ENCODE measurements at regions of chrX and their contacts with region 1.

Region 1: DNA sequence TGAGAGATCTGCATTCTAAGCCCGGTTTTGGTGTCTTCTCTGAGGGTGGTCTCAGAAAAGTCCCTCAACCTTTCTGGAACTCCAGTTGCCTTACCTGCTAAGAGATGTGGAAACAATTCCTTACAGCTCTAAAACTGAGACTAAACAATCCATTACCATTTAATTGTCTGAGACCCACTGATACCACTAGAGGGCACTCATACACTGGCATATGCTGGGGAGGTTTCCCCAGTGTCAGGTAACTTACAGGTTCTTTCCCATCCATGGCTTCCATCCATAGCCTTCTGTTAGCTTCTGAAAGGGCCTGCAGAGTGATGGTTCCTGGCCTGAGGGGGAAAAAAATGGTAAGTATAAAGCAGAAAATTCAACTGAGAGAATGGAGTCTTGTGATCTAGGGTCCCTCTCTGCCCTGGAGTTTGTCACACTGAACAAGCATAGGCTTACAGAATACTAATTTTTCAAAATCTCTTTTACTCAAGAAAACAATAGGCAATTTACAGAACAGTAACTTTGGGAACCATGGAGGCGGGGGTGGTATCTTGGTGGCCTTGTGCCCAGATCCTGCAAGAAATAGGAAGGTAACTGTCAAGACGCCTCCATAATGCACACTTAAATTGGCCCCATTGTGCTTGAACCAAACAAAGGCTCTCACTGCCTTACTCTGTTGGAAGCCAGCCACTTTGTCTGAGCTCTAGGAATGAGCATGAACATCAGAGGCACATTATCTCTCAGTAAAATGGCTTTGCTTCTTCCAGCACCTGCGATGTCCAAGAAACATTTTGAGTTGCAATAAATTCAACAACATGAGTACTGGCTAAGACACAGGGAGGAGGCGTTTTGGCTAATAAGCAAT is 236.1 kb downstream of the OPHN1 start:
- H3K4me3 ChIP-seq: no peak overlapping the region
- H3K27ac ChIP-seq: no peak overlapping the region
- H3K4me1 ChIP-seq: no peaks in the 10 kb centered on the region
- CTCF ChIP-seq: peak; percentile 80

Region 2: DNA sequence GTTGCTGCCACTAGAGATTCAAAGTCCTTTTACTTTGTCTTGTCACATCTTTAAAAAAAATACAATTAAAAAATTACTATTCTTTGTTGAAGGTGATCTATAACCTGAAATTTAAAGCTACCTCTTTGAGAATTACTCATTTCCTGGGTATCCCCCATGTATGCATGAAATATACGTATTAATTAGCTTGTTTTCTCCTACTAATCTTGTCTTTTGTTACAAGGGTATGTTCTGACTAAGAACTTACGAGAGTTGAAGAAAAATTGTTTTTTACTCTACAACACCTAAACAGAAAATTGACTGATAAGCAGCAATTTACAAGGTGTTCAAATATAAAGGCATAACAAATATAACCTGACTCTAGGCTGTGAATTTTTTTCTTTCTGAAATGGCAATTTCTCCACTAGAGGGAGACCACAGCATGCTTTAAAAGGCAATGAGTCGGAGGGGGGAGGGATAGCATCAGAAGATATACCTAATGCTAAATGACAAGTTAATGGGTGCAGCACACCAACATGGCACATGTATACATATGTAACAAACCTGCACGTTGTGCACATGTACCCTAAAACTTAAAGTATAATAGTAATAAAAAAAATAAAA is 13.5 kb before region 1 on chrX:
- CTCF ChIA-PET with region 1: interaction called, 18 read pairs
- POLR2A ChIA-PET with region 1: no interaction called
- H3K4me3 ChIP-seq: no peak overlapping the region
- H3K27ac ChIP-seq: no peak overlapping the region
- H3K4me1 ChIP-seq: no peaks in the 10 kb centered on the region
- CTCF ChIP-seq: peak; percentile 57

Region 3: DNA sequence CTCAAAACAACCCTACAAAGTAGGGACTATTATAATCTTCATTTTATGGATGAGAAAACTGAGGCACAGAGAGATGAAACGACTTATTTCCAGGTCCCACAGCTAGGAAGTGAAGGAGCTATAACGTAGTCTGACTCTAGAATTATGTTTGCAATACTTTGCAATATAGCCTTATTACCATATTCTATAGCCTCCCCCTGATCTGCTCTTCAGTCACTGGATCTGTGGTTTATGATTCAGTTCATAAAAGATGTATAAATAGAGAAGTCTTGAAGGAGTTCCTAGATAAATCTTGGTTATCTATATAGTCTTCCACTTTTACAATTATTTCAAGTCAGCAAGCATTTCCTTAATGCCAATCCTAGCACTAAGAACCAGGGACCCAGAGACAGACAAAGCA is 178.6 kb after region 1 on chrX:
- CTCF ChIA-PET with region 1: no interaction called
- POLR2A ChIA-PET with region 1: no interaction called
- H3K4me3 ChIP-seq: no peak overlapping the region
- H3K27ac ChIP-seq: no peak overlapping the region
- H3K4me1 ChIP-seq: no peaks in the 10 kb centered on the region
- CTCF ChIP-seq: no peak

Region 4: GRCh38 chrX:68433155-68433980 is 236.2 kb after region 1 on chrX and contains the start of gene OPHN1:
- CTCF ChIA-PET with region 1: no interaction called
- POLR2A ChIA-PET with region 1: no interaction called
- H3K4me3 ChIP-seq: peak within 1 kb of the TSS; percentile 55
- H3K27ac ChIP-seq: peak within 1 kb of the TSS; percentile 58
- H3K4me1 ChIP-seq: peaks cover 6% of the 10 kb centered on the region
- CTCF ChIP-seq: no peak

Region 5: GRCh38 chrX:68462653-68463052 is 265.5 kb after region 1 on chrX:
- CTCF ChIA-PET with region 1: interaction called, 16 read pairs
- POLR2A ChIA-PET with region 1: no interaction called
- H3K4me3 ChIP-seq: no peak overlapping the region
- H3K27ac ChIP-seq: no peak overlapping the region
- H3K4me1 ChIP-seq: no peaks in the 10 kb centered on the region
- CTCF ChIP-seq: peak; percentile 92

Region 6: DNA sequence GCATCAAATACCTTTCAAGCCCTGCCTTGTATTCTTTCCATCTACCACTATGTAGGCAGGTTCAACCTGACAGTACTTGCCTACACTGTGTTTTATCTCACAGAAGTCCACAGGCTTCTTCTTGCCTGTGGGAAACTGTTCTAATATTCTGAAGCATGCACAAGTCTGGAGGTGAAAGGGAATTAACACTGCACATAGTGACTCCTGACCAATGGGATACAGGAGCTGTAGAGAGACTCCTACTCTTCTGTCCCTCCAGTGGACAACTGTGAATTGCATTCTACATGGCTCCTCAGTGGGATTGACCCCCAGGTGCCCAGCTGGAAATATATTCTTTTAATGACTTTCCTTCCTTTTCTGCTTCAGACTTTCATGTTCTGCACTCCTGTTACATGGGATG is 293.4 kb after region 1 on chrX:
- CTCF ChIA-PET with region 1: interaction called, 28 read pairs
- POLR2A ChIA-PET with region 1: no interaction called
- H3K4me3 ChIP-seq: no peak overlapping the region
- H3K27ac ChIP-seq: no peak overlapping the region
- H3K4me1 ChIP-seq: no peaks in the 10 kb centered on the region
- CTCF ChIP-seq: no peak

Region 7: GRCh38 chrX:68511255-68511654 is 314.1 kb after region 1 on chrX:
- CTCF ChIA-PET with region 1: interaction called, 12 read pairs
- POLR2A ChIA-PET with region 1: no interaction called
- H3K4me3 ChIP-seq: no peak overlapping the region
- H3K27ac ChIP-seq: no peak overlapping the region
- H3K4me1 ChIP-seq: no peaks in the 10 kb centered on the region
- CTCF ChIP-seq: peak; percentile 56

Region 8: GRCh38 chrX:68710870-68711576 is 513.9 kb after region 1 on chrX:
- CTCF ChIA-PET with region 1: interaction called, 82 read pairs
- POLR2A ChIA-PET with region 1: no interaction called
- H3K4me3 ChIP-seq: no peak overlapping the region
- H3K27ac ChIP-seq: no peak overlapping the region
- H3K4me1 ChIP-seq: no peaks in the 10 kb centered on the region
- CTCF ChIP-seq: peak; percentile 53

Region 9: DNA sequence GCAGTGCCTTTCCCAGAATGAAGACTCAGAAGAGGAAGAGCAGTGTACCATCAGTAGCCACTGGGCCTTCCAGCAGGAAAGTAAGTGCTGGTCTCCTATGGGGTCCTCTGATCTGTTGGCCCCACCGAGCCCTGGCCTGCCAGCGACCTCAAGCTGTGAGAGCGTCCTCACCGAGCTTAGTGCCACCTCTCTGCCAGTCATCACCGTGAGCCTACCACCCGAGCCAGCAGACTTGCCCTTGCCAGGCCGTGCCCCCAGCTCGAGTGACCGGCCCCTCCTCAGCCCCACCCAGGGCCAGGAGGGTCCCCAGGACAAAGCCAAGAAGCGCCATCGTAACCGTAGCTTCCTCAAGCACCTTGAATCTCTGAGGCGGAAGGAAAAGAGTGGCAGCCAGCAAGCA is 520.0 kb after region 1 on chrX:
- CTCF ChIA-PET with region 1: interaction called, 82 read pairs
- POLR2A ChIA-PET with region 1: no interaction called
- H3K4me3 ChIP-seq: no peak overlapping the region
- H3K27ac ChIP-seq: no peak overlapping the region
- H3K4me1 ChIP-seq: no peaks in the 10 kb centered on the region
- CTCF ChIP-seq: no peak

Measured in HEK293 (cell line).